B cell (primary cell): ENCODE measurements at regions of chr9 and their contacts with region 1.

Region 1: GRCh38 chr9:76658535-76659231 is 105.6 kb upstream of the PCA3 start:
- DNase-seq: peak; percentile 68
- ATAC-seq: peak; percentile 81
- H3K4me3 ChIP-seq: no peak overlapping the region
- H3K4me3 Mint-ChIP-seq: no peak overlapping the region
- H3K27ac ChIP-seq: no peak overlapping the region
- H3K27ac Mint-ChIP-seq: no peak overlapping the region
- H3K4me1 ChIP-seq: peaks cover 17 to 32% of the 10 kb centered on the region in 2 donors
- H3K4me1 Mint-ChIP-seq: peaks cover 34% of the 10 kb centered on the region
- H3K27me3 ChIP-seq: no peaks in the 10 kb centered on the region
- H3K27me3 Mint-ChIP-seq: peaks cover 6% of the 10 kb centered on the region
- CTCF ChIP-seq: peak; percentile 79

Region 2: GRCh38 chr9:76393963-76394679 is 264.6 kb before region 1 on chr9 and contains the start of gene RFK:
- CTCF ChIA-PET with region 1: interaction called, 3 read pairs
- POLR2A ChIA-PET with region 1: interaction called, 4 read pairs
- intact Hi-C with region 1: loop called (anchors 2 kb)
- DNase-seq: peak; percentile 95
- ATAC-seq: peak; percentile 92
- H3K4me3 ChIP-seq: peak within 1 kb of the TSS; percentile 93 to 98 (median 97)
- H3K4me3 Mint-ChIP-seq: peak within 1 kb of the TSS; percentile 94
- H3K27ac ChIP-seq: peak within 1 kb of the TSS; percentile 78 to 98
- H3K27ac Mint-ChIP-seq: peak within 1 kb of the TSS; percentile 98
- H3K4me1 ChIP-seq: peaks cover 9 to 15% of the 10 kb centered on the region in 2 donors
- H3K4me1 Mint-ChIP-seq: peaks cover 15% of the 10 kb centered on the region
- H3K27me3 ChIP-seq: no peaks in the 10 kb centered on the region
- H3K27me3 Mint-ChIP-seq: no peaks in the 10 kb centered on the region
- CTCF ChIP-seq: peak; percentile 61
- total RNA-seq, gene RFK: 7.3 and 9.0 TPM in 2 replicates

Region 3: DNA sequence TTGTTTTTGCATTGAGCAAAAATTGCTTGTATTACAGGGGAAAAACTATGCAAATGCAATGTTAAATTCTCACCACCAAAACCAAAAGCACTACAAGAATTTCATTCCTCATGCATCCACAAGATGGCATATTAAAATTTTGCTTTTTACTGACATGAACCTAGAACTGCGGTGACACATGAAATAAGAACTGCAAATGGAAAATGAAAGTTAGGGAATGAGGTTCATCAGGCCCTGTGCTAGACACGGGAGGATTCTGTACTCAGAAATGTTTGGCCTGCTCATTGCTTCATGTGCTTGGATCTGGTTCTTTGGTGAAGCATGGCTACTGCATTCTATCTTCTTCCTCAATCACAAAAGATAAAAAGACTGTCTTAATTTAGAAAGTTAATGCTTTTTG is 255.3 kb before region 1 on chr9:
- CTCF ChIA-PET with region 1: interaction called, 16 read pairs
- POLR2A ChIA-PET with region 1: no interaction called
- intact Hi-C with region 1: loop called (anchors 1 kb)
- DNase-seq: peak; percentile 70
- ATAC-seq: peak; percentile 69
- H3K4me3 ChIP-seq: peak overlapping the region in 1 of 5 experiments; percentile 37
- H3K4me3 Mint-ChIP-seq: peak overlapping the region; percentile 40
- H3K27ac ChIP-seq: peak overlapping the region in 1 of 2 donors; percentile 20
- H3K27ac Mint-ChIP-seq: peak overlapping the region; percentile 10
- H3K4me1 ChIP-seq: peaks cover 0 to 3% of the 10 kb centered on the region in 2 donors
- H3K4me1 Mint-ChIP-seq: peaks cover 12% of the 10 kb centered on the region
- H3K27me3 ChIP-seq: no peaks in the 10 kb centered on the region
- H3K27me3 Mint-ChIP-seq: no peaks in the 10 kb centered on the region
- CTCF ChIP-seq: peak; percentile 73

Region 4: GRCh38 chr9:76443892-76444581 is 214.6 kb before region 1 on chr9:
- CTCF ChIA-PET with region 1: interaction called, 151 read pairs
- POLR2A ChIA-PET with region 1: no interaction called
- intact Hi-C with region 1: loop called (anchors 1 kb)
- DNase-seq: no peak
- ATAC-seq: no peak
- H3K4me3 ChIP-seq: no peak overlapping the region
- H3K4me3 Mint-ChIP-seq: no peak overlapping the region
- H3K27ac ChIP-seq: no peak overlapping the region
- H3K27ac Mint-ChIP-seq: no peak overlapping the region
- H3K4me1 ChIP-seq: peaks cover 3 to 5% of the 10 kb centered on the region in 2 donors
- H3K4me1 Mint-ChIP-seq: peaks cover 2% of the 10 kb centered on the region
- H3K27me3 ChIP-seq: no peaks in the 10 kb centered on the region
- H3K27me3 Mint-ChIP-seq: no peaks in the 10 kb centered on the region
- CTCF ChIP-seq: no peak

Region 5: GRCh38 chr9:76451234-76451633 is 207.4 kb before region 1 on chr9:
- CTCF ChIA-PET with region 1: interaction called, 151 read pairs
- POLR2A ChIA-PET with region 1: interaction called, 7 read pairs
- intact Hi-C with region 1: loop called (anchors 1 kb)
- DNase-seq: no peak
- ATAC-seq: no peak
- H3K4me3 ChIP-seq: no peak overlapping the region
- H3K4me3 Mint-ChIP-seq: no peak overlapping the region
- H3K27ac ChIP-seq: no peak overlapping the region
- H3K27ac Mint-ChIP-seq: no peak overlapping the region
- H3K4me1 ChIP-seq: peaks cover 7 to 9% of the 10 kb centered on the region in 2 donors
- H3K4me1 Mint-ChIP-seq: peaks cover 6% of the 10 kb centered on the region
- H3K27me3 ChIP-seq: no peaks in the 10 kb centered on the region
- H3K27me3 Mint-ChIP-seq: no peaks in the 10 kb centered on the region
- CTCF ChIP-seq: no peak